ENCODE measurements at regions of chr2 and their contacts with region 1.

Region 1: GRCh38 chr2:212905640-212906220 is 245.7 kb downstream of the IKZF2 start:
- DNase-seq: peak; percentile 98
- ATAC-seq: peak; percentile 87
- H3K4me3 ChIP-seq: peak overlapping the region; percentile 52; the same call in 1 of the 2 replicates
- H3K27ac ChIP-seq: peak overlapping the region; percentile 95
- H3K4me1 ChIP-seq: peaks cover 51% of the 10 kb centered on the region
- H3K27me3 ChIP-seq: no peaks in the 10 kb centered on the region
- CTCF ChIP-seq: no peak

Region 2: DNA sequence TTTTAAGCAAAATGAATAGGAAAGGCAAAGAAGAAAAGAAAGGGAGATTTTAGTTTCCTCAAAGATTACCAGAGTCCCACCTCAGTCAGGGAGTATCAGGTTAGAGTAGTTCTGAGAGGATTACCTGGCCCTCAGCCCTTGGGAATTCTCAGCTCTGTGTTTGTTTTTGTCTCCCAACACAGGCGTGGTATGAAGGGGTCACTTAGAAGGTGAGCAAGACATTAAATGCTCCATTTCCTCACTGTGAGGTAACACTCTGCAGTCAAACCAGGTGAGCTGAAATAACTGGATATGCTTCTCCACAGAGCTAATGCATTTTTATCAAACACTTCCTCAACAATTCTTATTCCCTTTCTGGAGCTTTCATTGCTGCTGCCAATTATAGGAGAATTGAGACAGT is 13.5 kb after region 1 on chr2:
- CTCF ChIA-PET with region 1: no interaction called
- POLR2A ChIA-PET with region 1: interaction called, 11 read pairs
- intact Hi-C with region 1: no loop called
- DNase-seq: peak; percentile 73
- ATAC-seq: peak; percentile 57
- H3K4me3 ChIP-seq: no peak overlapping the region
- H3K27ac ChIP-seq: peak overlapping the region; percentile 63
- H3K4me1 ChIP-seq: peaks cover 39% of the 10 kb centered on the region
- H3K27me3 ChIP-seq: no peaks in the 10 kb centered on the region
- CTCF ChIP-seq: no peak

Region 3: GRCh38 chr2:213021971-213022899 is 116.5 kb after region 1 on chr2:
- CTCF ChIA-PET with region 1: no interaction called
- POLR2A ChIA-PET with region 1: no interaction called
- intact Hi-C with region 1: loop called (anchors 5 kb)
- DNase-seq: peak; percentile 59
- ATAC-seq: peak; percentile 97
- H3K4me3 ChIP-seq: no peak overlapping the region
- H3K27ac ChIP-seq: peak overlapping the region; percentile 26
- H3K4me1 ChIP-seq: peaks cover 18% of the 10 kb centered on the region
- H3K27me3 ChIP-seq: no peaks in the 10 kb centered on the region
- CTCF ChIP-seq: no peak

Measured in PC-3 (cell line).